GM10248 (cell line): ENCODE measurements at regions of chr14 and their contacts with region 1.

Region 1: DNA sequence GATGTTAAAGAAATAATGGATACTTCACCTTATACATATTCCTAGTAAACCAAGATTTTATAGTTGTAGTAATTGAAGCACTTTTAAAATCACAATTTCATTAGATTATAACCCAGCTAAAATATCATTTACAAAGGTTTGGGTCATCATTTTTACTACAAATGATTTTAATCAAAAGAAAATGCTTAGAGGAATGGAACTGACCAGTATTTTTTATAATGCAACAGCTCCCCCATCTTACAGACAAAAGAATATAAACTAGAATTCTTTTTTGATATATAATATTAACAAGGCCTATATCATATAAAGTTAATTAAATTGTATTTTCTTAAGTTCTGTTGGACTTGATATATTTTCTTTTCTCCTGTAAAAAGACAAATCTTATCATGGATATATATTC is 20.4 kb upstream of the LRFN5 start:
- DNase-seq: no peak
- CTCF ChIP-seq: no peak

Region 2: DNA sequence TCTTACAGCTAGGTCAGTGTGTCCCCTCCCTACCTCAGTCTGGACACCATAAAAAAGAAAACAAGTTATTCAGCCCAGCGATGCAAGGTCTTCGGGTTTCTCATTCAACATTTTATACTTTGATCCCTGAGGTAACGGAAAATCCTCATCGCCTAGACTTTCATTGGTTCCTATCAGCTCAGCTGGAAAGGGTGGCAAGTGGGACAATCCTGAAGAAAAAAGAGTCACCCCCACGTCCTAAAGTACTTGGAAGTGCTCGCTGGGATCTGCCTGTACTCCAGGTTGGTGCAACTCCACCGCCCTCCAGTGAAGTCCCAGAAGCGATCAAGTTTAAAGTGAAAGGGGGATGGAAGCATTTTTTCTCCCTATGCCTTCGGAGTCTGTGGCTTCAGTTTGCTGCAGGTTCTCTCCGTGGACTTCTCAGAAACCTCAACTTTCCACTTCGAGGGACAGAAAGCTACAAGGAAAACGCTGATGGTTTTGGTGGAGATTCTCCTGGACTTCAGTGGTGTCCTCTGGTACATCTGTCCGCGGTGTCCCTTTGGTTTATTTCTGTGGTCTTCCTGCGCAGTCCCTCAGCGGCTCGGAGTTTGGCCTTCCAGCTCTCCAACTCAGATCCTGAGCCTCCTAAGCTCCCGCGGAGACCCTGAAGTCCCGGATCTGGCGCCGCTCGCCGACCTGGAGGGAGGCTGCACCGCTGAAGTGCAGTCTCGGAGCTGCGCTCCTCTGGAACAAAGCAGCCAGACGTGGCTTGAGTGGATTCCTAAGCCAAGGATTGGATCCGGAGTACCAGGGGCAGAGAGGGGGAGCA is 18.7 kb after region 1 on chr14:
- CTCF ChIA-PET with region 1: interaction called, 13 read pairs
- POLR2A ChIA-PET with region 1: no interaction called
- DNase-seq: no peak
- CTCF ChIP-seq: no peak